ENCODE measurements at regions of chr16 and their contacts with region 1.

Region 1: DNA sequence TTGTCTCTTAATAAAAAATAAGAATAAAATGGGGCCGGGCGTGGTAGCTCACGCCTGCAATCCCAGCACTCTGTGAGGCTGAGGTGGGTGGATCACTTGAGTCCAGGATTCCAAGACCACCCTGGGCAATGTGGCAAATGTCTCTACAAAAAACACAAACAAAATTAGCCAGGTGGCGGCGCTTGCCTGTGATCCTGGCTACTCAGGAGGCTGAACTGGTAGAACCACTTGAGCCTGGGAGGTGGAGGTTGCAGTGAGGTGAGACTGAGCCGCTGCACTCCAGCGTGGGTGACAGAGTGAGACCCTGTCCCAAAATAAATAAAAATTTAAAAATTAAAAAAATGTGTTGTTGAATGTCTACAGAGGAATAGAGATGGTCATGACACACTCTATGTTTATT is 2.9 kb upstream of the DEF8 start:
- DNase-seq: no peak
- H3K4me3 ChIP-seq: no peak overlapping the region
- H3K4me3 Mint-ChIP-seq: peak overlapping the region in 1 of 8 donors; percentile 20
- H3K27ac ChIP-seq: no peak overlapping the region
- H3K27ac Mint-ChIP-seq: no peak overlapping the region
- H3K4me1 ChIP-seq: peaks cover 16% of the 10 kb centered on the region
- H3K4me1 Mint-ChIP-seq: peaks cover 8 to 19% (median 15%) of the 10 kb centered on the region in 4 donors
- H3K27me3 ChIP-seq: peaks cover 5% of the 10 kb centered on the region
- H3K27me3 Mint-ChIP-seq: peaks cover 8 to 15% of the 10 kb centered on the region in 2 donors

Region 2: DNA sequence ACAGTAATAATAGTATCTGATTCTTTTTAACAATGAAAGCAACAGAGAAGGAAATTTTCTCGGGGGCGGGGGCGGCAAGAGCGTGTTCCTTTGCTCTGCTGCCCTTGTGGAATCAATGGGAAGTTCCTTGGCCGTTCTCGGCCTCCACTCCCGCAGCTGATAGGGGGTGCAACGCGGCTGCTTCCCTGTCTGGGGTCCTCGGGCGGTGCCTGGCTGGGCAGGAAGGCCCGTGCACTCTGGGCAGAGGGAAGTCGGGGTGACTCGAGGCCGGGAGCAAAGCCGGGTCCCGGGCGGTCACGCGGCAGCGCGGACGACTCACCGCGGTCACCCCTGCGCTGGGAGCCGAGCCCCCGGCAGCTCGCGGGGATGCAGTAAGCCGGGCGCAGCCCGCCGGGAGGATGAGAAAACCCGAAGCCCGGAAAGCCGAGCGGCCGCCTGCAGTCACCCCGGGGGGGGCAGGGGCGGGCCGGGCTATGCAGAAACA is 20.0 kb before region 1 on chr16:
- CTCF ChIA-PET with region 1: no interaction called
- POLR2A ChIA-PET with region 1: no interaction called
- intact Hi-C with region 1: loop called (anchors 1 kb)
- DNase-seq: no peak
- H3K4me3 ChIP-seq: no peak overlapping the region
- H3K4me3 Mint-ChIP-seq: peak overlapping the region in 5 of 8 donors; percentile 11 to 70 (median 46)
- H3K27ac ChIP-seq: no peak overlapping the region
- H3K27ac Mint-ChIP-seq: no peak overlapping the region
- H3K4me1 ChIP-seq: peaks cover 52% of the 10 kb centered on the region
- H3K4me1 Mint-ChIP-seq: peaks cover 8 to 22% (median 16%) of the 10 kb centered on the region in 4 donors
- H3K27me3 ChIP-seq: peaks cover 16% of the 10 kb centered on the region
- H3K27me3 Mint-ChIP-seq: peaks cover 5 to 21% of the 10 kb centered on the region in 2 donors

Region 3: DNA sequence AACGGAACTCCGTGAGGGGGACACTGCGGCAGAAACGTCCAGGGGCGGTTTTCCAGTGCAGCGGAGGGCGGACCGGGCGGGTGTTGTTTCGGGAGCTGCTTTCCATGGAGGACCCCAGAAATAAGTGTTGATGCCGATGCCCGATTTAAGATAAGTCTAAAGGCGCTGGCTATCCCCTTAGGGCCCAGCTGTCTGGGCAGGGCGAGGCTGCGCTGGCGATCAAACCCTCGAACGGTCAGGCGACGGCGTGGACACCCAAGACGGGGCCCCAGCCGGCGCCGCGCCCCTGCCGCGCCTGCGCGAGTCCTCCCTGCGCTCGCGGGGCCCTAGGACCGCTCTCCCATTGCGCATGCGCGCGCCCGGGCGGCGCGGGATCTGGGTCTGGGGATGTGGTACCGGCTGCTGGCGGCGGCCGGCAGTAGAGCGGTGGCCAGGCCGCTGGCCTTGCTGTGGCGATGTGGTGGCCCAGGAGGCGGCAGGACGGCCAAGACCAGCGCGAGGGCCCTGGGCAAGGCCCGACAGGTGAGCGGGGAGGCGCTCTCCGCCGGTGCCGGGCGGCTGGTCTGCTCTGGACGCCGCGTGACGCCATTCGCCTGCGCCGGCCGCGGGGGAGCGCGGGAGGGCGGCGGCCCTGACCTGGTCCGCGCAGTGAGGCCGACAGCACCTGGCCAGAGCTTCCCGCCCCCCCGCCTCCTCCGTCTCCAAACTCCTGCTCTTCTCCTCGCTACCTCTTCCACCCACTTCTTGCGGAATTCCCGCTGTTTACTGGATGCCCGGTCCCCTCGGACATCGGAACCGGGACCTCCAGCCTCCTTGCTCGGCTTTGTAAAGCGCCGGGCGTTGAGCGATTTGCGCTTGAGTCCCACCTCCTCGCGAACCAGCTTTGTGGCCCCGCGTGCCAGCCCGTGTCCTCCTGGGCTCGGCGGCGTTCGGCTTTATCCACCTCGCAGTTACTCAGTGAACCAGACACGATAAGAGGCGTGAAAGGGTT is 26.9 kb after region 1 on chr16:
- CTCF ChIA-PET with region 1: interaction called, 3 read pairs
- POLR2A ChIA-PET with region 1: interaction called, 7 read pairs
- intact Hi-C with region 1: loop called (anchors 1 kb)
- DNase-seq: peak; percentile 88 to 94 (median 93)
- H3K4me3 ChIP-seq: peak overlapping the region; percentile 91 to 92
- H3K4me3 Mint-ChIP-seq: peak overlapping the region; percentile 98 to 99 (median 98)
- H3K27ac ChIP-seq: peak overlapping the region; percentile 78
- H3K27ac Mint-ChIP-seq: peak overlapping the region; percentile 96 to 99 (median 98)
- H3K4me1 ChIP-seq: peaks cover 40% of the 10 kb centered on the region
- H3K4me1 Mint-ChIP-seq: peaks cover 20 to 47% (median 34%) of the 10 kb centered on the region in 4 donors
- H3K27me3 ChIP-seq: no peaks in the 10 kb centered on the region
- H3K27me3 Mint-ChIP-seq: no peaks in the 10 kb centered on the region